Thyroid gland (tissue), 4 donors: ENCODE measurements at regions of chr12 and their contacts with region 1.

Region 1: DNA sequence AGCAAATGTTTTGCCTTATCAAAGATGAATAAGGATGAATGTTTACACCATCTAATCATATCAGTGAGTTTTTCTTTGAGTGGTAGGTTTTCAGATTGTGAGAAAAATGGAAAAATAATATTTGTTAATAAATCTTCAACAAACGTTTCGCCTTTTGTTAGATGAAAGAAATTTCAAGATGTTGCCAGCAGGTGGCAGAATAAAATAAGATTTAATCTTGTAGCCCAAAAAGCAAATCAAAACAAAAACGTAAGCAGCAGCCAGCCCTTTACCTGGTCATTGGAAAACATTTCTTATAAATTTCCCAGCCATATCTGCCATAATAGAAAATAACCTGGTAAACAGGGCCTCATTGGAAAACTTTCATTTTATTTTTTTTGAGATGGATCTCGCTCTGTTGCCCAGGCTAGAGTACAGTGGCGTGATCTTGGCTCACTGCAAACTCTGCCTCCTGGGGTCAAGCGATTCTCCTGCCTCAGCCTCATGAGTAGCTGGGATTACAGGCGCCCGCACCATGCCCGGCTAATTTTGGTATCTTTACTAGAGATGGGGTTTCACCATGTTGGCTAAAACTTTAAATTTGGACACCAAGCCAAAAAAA is 15.4 kb upstream of the TMEM120B start:
- DNase-seq: no peak
- H3K4me3 ChIP-seq: no peak overlapping the region
- H3K27ac ChIP-seq: no peak overlapping the region
- H3K4me1 ChIP-seq: peaks cover 14 to 20% of the 10 kb centered on the region in 2 donors
- H3K27me3 ChIP-seq: no peaks in the 10 kb centered on the region
- CTCF ChIP-seq: peak in 5 of 6 experiments; percentile 17 to 83 (median 49)
- POLR2A ChIP-seq: no peak

Region 2: DNA sequence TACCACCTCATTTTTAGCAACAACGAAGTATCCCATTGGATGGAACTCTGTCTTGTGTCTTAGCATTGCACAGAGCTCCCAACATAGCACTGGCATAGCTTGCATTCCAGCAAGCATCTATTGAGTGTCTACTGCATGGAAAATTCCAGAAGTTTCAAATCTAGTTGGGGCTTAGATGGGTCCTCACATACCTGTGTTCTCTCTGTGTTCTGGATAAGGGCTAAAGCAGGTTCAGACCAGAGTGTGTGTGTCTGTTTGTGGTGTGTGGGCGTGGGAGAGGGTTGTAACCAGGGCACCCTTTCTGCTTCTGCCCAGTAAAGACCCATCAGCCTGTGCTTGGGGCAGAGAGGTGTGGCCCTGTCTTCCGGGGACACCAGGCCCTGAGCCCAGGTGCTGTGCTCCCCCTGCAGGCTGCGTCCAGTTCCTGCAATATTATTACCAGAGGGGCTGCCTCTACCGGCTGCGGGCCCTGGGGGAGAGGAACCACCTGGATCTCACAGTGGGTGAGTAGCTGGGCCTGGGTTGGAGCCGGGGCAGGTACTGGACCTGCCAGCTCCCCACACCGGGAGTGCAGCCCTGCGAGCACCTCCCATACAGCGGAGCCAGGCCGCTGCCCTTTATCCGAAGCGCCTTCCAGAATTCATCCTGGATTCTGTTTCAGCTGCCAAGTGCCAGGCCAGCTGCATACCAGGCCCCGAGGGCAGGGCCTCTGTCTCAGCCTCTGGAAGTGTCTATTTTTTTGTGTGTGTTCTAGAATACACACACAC is 76.0 kb after region 1 on chr12:
- intact Hi-C with region 1: loop called (anchors 5 kb)
- DNase-seq: peak; percentile 86 to 89
- H3K4me3 ChIP-seq: no peak overlapping the region
- H3K27ac ChIP-seq: peak overlapping the region; percentile 89 to 98 (median 96)
- H3K4me1 ChIP-seq: peaks cover 40 to 60% of the 10 kb centered on the region in 2 donors
- H3K27me3 ChIP-seq: no peaks in the 10 kb centered on the region
- CTCF ChIP-seq: peak; percentile 64 to 97 (median 85)
- POLR2A ChIP-seq: peak in 1 of 2 donors; percentile 28

Region 3: DNA sequence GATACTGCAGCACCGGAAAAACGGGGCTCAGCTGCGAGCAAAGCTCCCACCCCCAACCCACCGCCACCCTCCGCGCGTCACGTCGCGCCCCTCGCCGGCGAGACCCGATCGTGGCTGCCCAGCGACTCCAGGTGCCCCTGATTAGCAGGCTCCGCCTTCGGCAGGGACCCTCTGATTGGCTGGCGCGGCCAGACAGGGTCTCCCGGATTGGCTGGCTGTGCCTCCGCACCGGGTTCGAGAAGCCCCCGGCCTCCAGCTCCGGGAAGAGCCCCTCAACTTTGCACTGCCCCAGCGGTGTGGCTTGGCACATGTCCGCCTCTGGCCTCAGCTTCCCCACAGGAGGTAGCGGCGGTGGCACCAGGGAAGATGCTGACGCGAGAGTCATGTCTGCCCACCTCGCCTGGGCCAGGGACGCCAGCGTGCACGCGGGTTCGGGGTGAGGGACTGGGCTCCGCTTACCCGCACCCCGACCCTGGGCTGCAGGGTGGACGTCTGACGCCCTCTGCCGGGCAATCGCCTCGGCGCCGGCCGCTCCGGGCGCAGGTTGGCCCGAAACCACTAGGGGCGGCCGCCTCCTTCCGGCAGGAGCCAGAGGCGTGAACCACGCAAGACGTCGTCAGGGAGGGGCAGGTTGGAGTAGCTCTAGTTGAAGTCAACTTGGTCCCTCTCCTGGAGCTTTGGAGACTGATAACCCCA is 96.8 kb after region 1 on chr12:
- intact Hi-C with region 1: loop called (anchors 5 kb)
- DNase-seq: peak; percentile 93 to 94
- H3K4me3 ChIP-seq: peak overlapping the region in 2 of 3 donors; percentile 3 to 32
- H3K27ac ChIP-seq: peak overlapping the region; percentile 97 to 100 (median 100)
- H3K4me1 ChIP-seq: peaks cover 62 to 78% of the 10 kb centered on the region in 2 donors
- H3K27me3 ChIP-seq: no peaks in the 10 kb centered on the region
- CTCF ChIP-seq: peak; percentile 98 to 100 (median 100)
- POLR2A ChIP-seq: peak in 1 of 2 donors; percentile 28

Region 4: GRCh38 chr12:121811434-121812319 is 114.5 kb after region 1 on chr12:
- intact Hi-C with region 1: loop called (anchors 5 kb)
- DNase-seq: peak; percentile 81
- H3K4me3 ChIP-seq: peak overlapping the region; percentile 7 to 36 (median 27)
- H3K27ac ChIP-seq: peak overlapping the region in 2 of 3 donors; percentile 59 to 69
- H3K4me1 ChIP-seq: peaks cover 20 to 42% of the 10 kb centered on the region in 2 donors
- H3K27me3 ChIP-seq: no peaks in the 10 kb centered on the region
- CTCF ChIP-seq: peak; percentile 72 to 100 (median 98)
- POLR2A ChIP-seq: no peak

Region 5: GRCh38 chr12:121872546-121873215 is 175.5 kb after region 1 on chr12:
- intact Hi-C with region 1: no loop called
- DNase-seq: no peak
- H3K4me3 ChIP-seq: no peak overlapping the region
- H3K27ac ChIP-seq: no peak overlapping the region
- H3K4me1 ChIP-seq: no peaks in the 10 kb centered on the region
- H3K27me3 ChIP-seq: no peaks in the 10 kb centered on the region
- CTCF ChIP-seq: no peak
- POLR2A ChIP-seq: no peak